Panc1 (cell line): ENCODE measurements at regions of chr2 and their contacts with region 1.

Region 1: DNA sequence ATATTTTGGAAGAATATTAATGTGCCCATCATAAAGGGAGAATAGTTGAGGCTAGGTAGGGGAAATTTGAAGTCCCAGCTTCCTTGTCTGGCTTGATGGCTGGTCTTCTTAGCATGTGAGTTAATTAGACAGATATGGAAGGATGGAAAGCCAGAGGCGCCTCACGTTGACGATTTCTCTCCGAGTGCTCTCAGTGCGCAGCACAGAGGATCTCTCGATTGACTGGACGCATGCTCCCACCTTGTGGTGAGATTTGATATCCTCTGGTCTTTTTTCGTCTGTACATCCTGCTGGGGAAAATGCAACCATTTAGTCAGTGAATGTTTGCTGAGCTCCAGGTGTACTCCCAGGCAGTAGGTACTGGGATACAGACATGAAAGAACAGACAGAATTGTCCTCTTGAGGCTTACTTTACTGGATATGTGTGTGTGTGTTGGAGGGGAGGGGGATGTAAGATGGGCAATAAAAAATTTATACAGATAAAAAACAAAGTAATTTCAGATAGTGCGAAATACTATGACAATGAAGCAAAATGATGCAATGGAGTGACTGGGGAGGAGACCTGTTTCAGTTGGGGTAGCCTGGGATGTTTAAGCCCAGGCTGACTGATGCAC is 66.9 kb upstream of the ZNG1B start:
- DNase-seq: peak; percentile 61
- ATAC-seq: peak; percentile 98
- H3K4me3 ChIP-seq: no peak overlapping the region
- H3K27ac ChIP-seq: no peak overlapping the region
- H3K4me1 ChIP-seq: no peaks in the 10 kb centered on the region
- H3K27me3 ChIP-seq: no peaks in the 10 kb centered on the region
- CTCF ChIP-seq: peak; percentile 79

Region 2: GRCh38 chr2:113117541-113118262 is 252.9 kb before region 1 on chr2:
- CTCF ChIA-PET with region 1: no interaction called
- POLR2A ChIA-PET with region 1: no interaction called
- in situ Hi-C with region 1: no loop called
- intact Hi-C with region 1: no loop called
- DNase-seq: no peak
- ATAC-seq: no peak
- H3K4me3 ChIP-seq: no peak overlapping the region
- H3K27ac ChIP-seq: no peak overlapping the region
- H3K4me1 ChIP-seq: no peaks in the 10 kb centered on the region
- H3K27me3 ChIP-seq: peaks cover 7% of the 10 kb centered on the region; the same call in 1 of the 2 replicates
- CTCF ChIP-seq: no peak

Region 3: DNA sequence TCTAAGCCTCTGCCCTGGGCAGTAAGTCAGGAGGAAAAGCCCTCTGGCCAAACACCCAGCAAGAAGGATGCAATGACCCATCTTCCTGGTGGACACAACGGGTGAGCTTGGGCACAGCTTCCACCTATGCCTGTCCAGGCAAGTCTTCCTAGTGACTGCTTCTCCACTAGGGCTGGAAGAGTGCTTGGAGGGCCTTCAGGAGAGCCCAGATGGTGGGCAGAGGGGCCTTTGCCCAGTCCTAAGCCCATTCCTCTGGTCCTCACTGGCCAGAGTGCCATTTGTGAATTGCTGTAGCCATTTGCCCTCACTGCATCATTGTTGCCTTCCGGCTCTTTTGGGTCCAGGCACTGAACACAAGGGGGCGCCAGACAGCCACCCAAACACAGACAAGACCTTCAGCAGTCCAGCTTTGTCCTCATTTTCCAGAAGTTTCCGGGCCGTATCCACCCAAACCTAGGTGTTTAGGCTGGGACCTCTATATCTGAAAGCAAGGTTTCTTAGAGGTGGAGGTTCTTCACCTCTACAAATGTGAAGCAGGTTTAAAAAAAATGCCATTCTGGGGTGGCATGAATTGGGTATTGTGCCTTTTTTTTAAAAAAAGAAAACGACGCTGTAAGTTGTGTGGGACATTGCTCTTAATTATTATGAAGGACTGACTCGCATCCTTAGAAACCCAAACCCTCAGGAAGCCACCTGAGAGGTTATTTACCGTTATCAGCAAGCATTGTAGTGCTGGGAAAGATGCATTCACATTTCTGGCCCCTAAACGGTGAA is 121.4 kb before region 1 on chr2:
- CTCF ChIA-PET with region 1: interaction called, 5 read pairs
- POLR2A ChIA-PET with region 1: no interaction called
- in situ Hi-C with region 1: no loop called
- intact Hi-C with region 1: loop called (anchors 1 kb)
- DNase-seq: peak; percentile 61
- ATAC-seq: peak; percentile 89
- H3K4me3 ChIP-seq: no peak overlapping the region
- H3K27ac ChIP-seq: no peak overlapping the region
- H3K4me1 ChIP-seq: no peaks in the 10 kb centered on the region
- H3K27me3 ChIP-seq: no peaks in the 10 kb centered on the region
- CTCF ChIP-seq: peak; percentile 94